Caco-2 (cell line): ENCODE measurements at regions of chr2 and their contacts with region 1.

Region 1: GRCh38 chr2:185291035-185291647 is 447.5 kb upstream of the FSIP2 start:
- DNase-seq: peak; percentile 72 to 79
- H3K4me3 ChIP-seq: no peak overlapping the region
- H3K4me3 Mint-ChIP-seq: no peak overlapping the region
- H3K27ac Mint-ChIP-seq: no peak overlapping the region
- H3K4me1 ChIP-seq: no peaks in the 10 kb centered on the region; the same call in 1 of the 2 replicates
- H3K4me1 Mint-ChIP-seq: peaks cover 5% of the 10 kb centered on the region
- H3K27me3 ChIP-seq: no peaks in the 10 kb centered on the region
- H3K27me3 Mint-ChIP-seq: no peaks in the 10 kb centered on the region
- CTCF ChIP-seq: peak; percentile 71 to 83

Region 2: DNA sequence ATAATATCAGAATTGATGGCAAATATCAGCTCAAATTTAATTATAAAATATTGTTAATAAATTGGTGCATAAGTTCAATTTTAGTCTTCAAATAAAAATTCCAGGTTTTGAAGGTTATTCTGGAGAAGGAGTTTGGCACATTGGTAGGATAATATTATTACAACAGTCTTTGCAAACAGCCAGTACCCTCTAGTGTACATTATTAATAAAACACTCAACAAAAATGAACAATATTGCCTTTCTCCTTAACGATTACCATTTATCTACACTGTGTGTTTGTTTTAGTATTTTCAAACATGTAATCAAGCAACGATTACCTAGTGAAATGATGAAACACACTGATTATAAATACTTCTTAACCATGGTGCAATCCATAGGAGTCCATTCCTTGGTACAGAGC is 113.4 kb after region 1 on chr2:
- CTCF ChIA-PET with region 1: no interaction called
- POLR2A ChIA-PET with region 1: no interaction called
- intact Hi-C with region 1: loop called (anchors 1 kb)
- DNase-seq: no peak
- H3K4me3 ChIP-seq: no peak overlapping the region
- H3K4me3 Mint-ChIP-seq: no peak overlapping the region
- H3K27ac Mint-ChIP-seq: no peak overlapping the region
- H3K4me1 ChIP-seq: no peaks in the 10 kb centered on the region
- H3K4me1 Mint-ChIP-seq: no peaks in the 10 kb centered on the region
- H3K27me3 ChIP-seq: no peaks in the 10 kb centered on the region
- H3K27me3 Mint-ChIP-seq: no peaks in the 10 kb centered on the region
- CTCF ChIP-seq: no peak

Region 3: DNA sequence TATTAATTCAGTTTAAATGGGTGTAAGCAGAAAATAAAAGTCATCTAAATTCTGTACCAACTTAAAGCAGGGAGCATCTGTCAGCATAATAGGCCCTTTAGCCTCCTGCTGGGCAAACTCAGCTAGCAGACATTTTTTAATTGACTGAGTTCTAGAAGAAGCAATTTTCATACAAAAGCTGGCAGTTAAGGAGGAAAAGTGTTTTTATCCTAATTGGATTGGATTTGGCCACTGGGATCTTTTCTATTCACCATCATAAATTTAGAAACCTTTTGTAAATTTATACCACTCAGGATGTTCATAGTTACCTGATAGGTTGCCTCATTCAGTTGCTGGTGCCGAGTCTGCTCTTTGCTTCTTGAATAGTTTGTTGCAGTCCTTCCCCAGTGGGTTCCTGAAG is 184.8 kb after region 1 on chr2:
- CTCF ChIA-PET with region 1: no interaction called
- POLR2A ChIA-PET with region 1: no interaction called
- intact Hi-C with region 1: loop called (anchors 2 kb)
- DNase-seq: no peak
- H3K4me3 ChIP-seq: no peak overlapping the region
- H3K4me3 Mint-ChIP-seq: no peak overlapping the region
- H3K27ac Mint-ChIP-seq: no peak overlapping the region
- H3K4me1 ChIP-seq: no peaks in the 10 kb centered on the region
- H3K4me1 Mint-ChIP-seq: no peaks in the 10 kb centered on the region
- H3K27me3 ChIP-seq: no peaks in the 10 kb centered on the region
- H3K27me3 Mint-ChIP-seq: no peaks in the 10 kb centered on the region
- CTCF ChIP-seq: no peak

Region 4: DNA sequence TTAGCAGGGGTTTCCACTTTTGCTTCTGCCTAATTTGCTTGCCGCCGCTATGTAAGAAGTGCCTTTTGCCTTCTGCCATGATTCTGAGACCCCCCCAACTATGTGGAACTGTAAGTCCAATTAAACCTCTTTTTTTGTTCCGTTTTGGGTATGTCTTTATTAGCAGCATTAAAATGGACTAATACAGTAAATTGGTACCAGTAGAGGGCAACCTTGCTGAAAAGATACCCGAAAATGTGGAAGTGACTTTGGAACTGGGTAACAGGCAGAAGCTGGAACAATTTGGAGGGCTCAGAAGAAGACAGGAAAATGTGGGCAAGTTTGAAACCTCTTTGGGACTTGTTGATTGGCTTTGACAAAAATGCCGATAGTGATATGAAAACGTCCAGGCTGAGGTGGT is 231.3 kb after region 1 on chr2:
- CTCF ChIA-PET with region 1: no interaction called
- POLR2A ChIA-PET with region 1: no interaction called
- intact Hi-C with region 1: loop called (anchors 10 kb)
- DNase-seq: no peak
- H3K4me3 ChIP-seq: no peak overlapping the region
- H3K4me3 Mint-ChIP-seq: no peak overlapping the region
- H3K27ac Mint-ChIP-seq: no peak overlapping the region
- H3K4me1 ChIP-seq: no peaks in the 10 kb centered on the region
- H3K4me1 Mint-ChIP-seq: no peaks in the 10 kb centered on the region
- H3K27me3 ChIP-seq: no peaks in the 10 kb centered on the region
- H3K27me3 Mint-ChIP-seq: no peaks in the 10 kb centered on the region
- CTCF ChIP-seq: peak; percentile 8 to 16